IMR-90 (cell line): ENCODE measurements at regions of chr3 and their contacts with region 1.

Region 1: DNA sequence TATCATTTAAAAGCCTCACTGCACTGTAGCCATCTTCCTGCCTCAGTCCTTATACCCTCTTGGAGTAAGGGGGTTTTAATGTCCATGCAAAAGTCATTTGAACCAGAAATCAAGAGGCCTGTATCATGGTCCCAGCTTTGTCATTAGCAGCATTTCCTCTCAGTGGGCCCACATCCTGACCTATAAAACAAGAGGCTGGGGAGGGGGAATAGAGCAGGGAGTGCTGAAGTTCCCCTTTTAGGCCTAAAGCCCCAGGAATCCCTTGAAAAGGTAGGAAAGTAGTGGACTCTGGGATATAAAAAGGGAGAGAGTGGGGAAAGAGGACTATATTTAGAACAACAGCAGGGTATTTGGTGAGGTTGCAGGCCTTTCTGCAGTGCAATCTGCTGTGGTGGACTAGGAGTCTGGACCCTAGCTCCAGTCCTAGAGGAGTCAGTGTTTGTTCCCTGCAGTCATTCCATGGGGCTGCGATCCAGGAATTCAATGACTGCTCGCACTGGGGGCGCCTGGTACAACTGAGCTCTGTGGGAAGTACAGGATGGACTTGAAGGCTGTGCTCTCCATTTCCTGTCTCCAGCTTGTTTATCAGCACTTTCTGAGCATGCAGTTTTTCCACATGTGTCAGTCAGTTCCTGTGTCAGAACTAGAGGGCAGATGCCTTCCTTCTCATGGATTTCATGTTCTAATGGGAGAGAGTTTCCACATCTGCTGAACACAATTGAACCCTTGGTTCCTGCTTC is 46.8 kb downstream of the PDHB start:
- DNase-seq: peak; percentile 94
- ATAC-seq: peak; percentile 9
- H3K4me3 ChIP-seq: no peak overlapping the region
- H3K27ac ChIP-seq: peak overlapping the region; percentile 98
- H3K4me1 ChIP-seq: peaks cover 42% of the 10 kb centered on the region
- H3K27me3 ChIP-seq: no peaks in the 10 kb centered on the region
- CTCF ChIP-seq: no peak
- POLR2A ChIP-seq: peak; percentile 34; the same call in 1 of the 2 replicates
- RAD21 ChIP-seq: no peak

Region 2: DNA sequence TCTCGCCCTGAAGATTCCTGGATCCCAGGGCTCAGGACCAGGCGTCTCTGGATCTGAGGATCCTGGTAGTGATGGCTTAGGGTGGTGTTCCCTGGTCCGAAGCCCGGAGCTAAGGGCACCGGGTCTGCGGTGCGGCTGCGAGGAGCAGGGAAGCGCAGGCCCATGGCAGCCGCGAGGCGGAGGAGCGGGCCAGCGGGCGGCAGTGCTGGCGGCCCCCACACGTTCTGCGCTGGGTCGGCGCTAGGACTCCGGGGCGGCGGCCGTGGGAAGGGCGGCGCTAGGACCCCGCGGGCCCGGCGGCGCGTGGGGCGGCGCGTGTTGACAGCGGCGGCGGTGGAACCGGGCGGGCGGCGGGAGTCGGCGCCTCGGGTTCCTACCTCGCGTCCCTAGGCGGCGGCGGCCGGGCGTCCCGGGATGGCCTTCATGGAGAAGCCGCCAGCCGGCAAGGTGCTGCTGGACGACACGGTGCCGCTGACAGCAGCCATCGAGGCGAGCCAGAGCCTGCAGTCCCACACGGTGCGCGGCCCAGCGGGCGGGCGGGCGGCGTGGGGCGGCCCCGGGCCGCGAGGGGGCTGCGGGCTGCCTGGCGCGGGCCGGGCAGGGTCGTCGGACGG is 54.1 kb before region 1 on chr3 and contains the start of gene PXK:
- CTCF ChIA-PET with region 1: interaction called, 3 read pairs
- POLR2A ChIA-PET with region 1: interaction called, 5 read pairs
- dilution Hi-C with region 1: no loop called
- in situ Hi-C with region 1: no loop called
- intact Hi-C with region 1: loop called (anchors 1 kb)
- DNase-seq: peak; percentile 70
- ATAC-seq: peak; percentile 87
- H3K4me3 ChIP-seq: peak within 1 kb of the TSS; percentile 91
- H3K27ac ChIP-seq: peak within 1 kb of the TSS; percentile 93
- H3K4me1 ChIP-seq: peaks cover 16% of the 10 kb centered on the region
- H3K27me3 ChIP-seq: no peaks in the 10 kb centered on the region
- CTCF ChIP-seq: peak; percentile 37
- POLR2A ChIP-seq: peak; percentile 32; the same call in 1 of the 2 replicates
- RAD21 ChIP-seq: peak; percentile 46
- total RNA-seq, gene PXK: 14.3 and 15.6 TPM in 2 replicates

Region 3: DNA sequence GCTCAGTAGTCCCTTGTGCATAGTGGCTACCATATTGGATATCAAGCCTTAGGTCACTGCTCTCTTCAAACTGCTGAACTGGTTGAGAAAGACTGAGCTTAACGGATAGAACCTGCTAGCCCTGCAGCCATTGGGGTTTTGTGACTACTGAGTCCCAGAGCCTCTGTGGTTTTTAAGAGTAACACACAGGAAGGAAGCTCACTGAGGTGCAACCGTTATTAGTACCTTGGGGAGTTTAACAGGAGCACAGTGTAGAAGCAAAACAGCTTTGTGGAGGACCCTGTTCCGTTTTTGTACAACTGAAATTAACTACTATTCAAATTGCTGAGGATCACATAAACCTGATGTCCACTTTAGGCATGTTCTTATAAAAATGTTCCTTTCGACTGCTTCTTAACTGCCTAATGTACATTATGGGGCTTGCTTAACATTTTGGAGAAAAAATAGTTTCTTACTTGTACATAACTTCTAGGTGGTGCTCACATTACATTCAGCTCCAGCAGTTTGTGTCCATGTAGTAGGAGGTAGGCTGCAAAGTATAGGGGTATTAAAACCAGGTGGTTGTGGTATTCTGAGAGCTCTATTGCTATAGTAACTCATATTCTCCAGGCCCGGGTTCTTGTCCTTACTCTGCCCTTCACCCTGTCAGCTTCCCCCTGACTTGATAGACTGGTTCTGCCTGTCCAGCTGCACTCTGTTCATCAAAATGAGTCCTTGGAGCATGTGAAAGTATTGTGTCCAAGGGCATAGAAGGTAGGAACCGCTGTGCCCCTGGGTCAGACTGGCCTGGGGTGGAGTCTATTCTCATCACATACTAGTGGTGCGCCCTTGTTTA is 36.8 kb before region 1 on chr3:
- CTCF ChIA-PET with region 1: interaction called, 3 read pairs
- POLR2A ChIA-PET with region 1: no interaction called
- dilution Hi-C with region 1: no loop called
- in situ Hi-C with region 1: no loop called
- intact Hi-C with region 1: loop called (anchors 5 kb)
- DNase-seq: no peak
- ATAC-seq: peak; percentile 7; the same call in 1 of the 2 replicates
- H3K4me3 ChIP-seq: no peak overlapping the region
- H3K27ac ChIP-seq: peak overlapping the region; percentile 4; the same call in 1 of the 2 replicates
- H3K4me1 ChIP-seq: peaks cover 11% of the 10 kb centered on the region
- H3K27me3 ChIP-seq: no peaks in the 10 kb centered on the region
- CTCF ChIP-seq: no peak
- POLR2A ChIP-seq: no peak
- RAD21 ChIP-seq: no peak

Region 4: GRCh38 chr3:58418227-58418626 is 31.4 kb after region 1 on chr3:
- CTCF ChIA-PET with region 1: no interaction called
- POLR2A ChIA-PET with region 1: no interaction called
- dilution Hi-C with region 1: no loop called
- in situ Hi-C with region 1: no loop called
- intact Hi-C with region 1: no loop called
- DNase-seq: no peak
- ATAC-seq: no peak
- H3K4me3 ChIP-seq: no peak overlapping the region
- H3K27ac ChIP-seq: no peak overlapping the region
- H3K4me1 ChIP-seq: peaks cover 4% of the 10 kb centered on the region
- H3K27me3 ChIP-seq: no peaks in the 10 kb centered on the region
- CTCF ChIP-seq: no peak
- POLR2A ChIP-seq: no peak
- RAD21 ChIP-seq: no peak